Activated CD4-positive, alpha-beta memory T cell treated with anti-CD3 and anti-CD28 coated beads, Interleukin-2, amount 10 ng/mL, durations not matched to agents 7 days and 5 days (primary cell): ENCODE measurements at regions of chr15 and their contacts with region 1.

Region 1: GRCh38 chr15:82999905-83000671 is 11.4 kb downstream of the C15orf40 start:
- DNase-seq: peak; percentile 44
- H3K4me3 Mint-ChIP-seq: peak overlapping the region; percentile 57
- H3K27ac Mint-ChIP-seq: no peak overlapping the region
- H3K4me1 Mint-ChIP-seq: peaks cover 8% of the 10 kb centered on the region
- H3K27me3 Mint-ChIP-seq: no peaks in the 10 kb centered on the region

Region 2: GRCh38 chr15:82530606-82531379 is 469.3 kb before region 1 on chr15:
- CTCF ChIA-PET with region 1: interaction called, 12 read pairs
- POLR2A ChIA-PET with region 1: no interaction called
- DNase-seq: peak; percentile 75
- H3K4me3 Mint-ChIP-seq: peak overlapping the region; percentile 53
- H3K27ac Mint-ChIP-seq: peak overlapping the region; percentile 64
- H3K4me1 Mint-ChIP-seq: peaks cover 13% of the 10 kb centered on the region
- H3K27me3 Mint-ChIP-seq: peaks cover 3% of the 10 kb centered on the region

Region 3: GRCh38 chr15:82540055-82540983 is 459.8 kb before region 1 on chr15 and contains the start of gene RPS17:
- CTCF ChIA-PET with region 1: interaction called, 3 read pairs
- POLR2A ChIA-PET with region 1: interaction called, 18 read pairs
- DNase-seq: peak; percentile 98
- H3K4me3 Mint-ChIP-seq: peak within 1 kb of the TSS; percentile 97
- H3K27ac Mint-ChIP-seq: peak within 1 kb of the TSS; percentile 95
- H3K4me1 Mint-ChIP-seq: peaks cover 47% of the 10 kb centered on the region
- H3K27me3 Mint-ChIP-seq: no peaks in the 10 kb centered on the region
- total RNA-seq, gene RPS17: 1,261 to 1,293 TPM

Region 4: GRCh38 chr15:82809404-82810060 is 190.6 kb before region 1 on chr15 and contains the start of gene WHAMM:
- CTCF ChIA-PET with region 1: interaction called, 10 read pairs
- POLR2A ChIA-PET with region 1: no interaction called
- DNase-seq: peak; percentile 96
- H3K4me3 Mint-ChIP-seq: peak within 1 kb of the TSS; percentile 85
- H3K27ac Mint-ChIP-seq: peak within 1 kb of the TSS; percentile 86
- H3K4me1 Mint-ChIP-seq: peaks cover 31% of the 10 kb centered on the region
- H3K27me3 Mint-ChIP-seq: peaks cover 15% of the 10 kb centered on the region
- total RNA-seq, gene WHAMM: 11.1 to 13.7 TPM

Region 5: GRCh38 chr15:82849556-82850512 is 150.3 kb before region 1 on chr15:
- CTCF ChIA-PET with region 1: interaction called, 61 read pairs
- POLR2A ChIA-PET with region 1: interaction called, 4 read pairs
- DNase-seq: peak; percentile 58
- H3K4me3 Mint-ChIP-seq: no peak overlapping the region
- H3K27ac Mint-ChIP-seq: no peak overlapping the region
- H3K4me1 Mint-ChIP-seq: peaks cover 6% of the 10 kb centered on the region
- H3K27me3 Mint-ChIP-seq: peaks cover 5% of the 10 kb centered on the region